ENCODE measurements at regions of chr11 and their contacts with region 1.

Region 1: DNA sequence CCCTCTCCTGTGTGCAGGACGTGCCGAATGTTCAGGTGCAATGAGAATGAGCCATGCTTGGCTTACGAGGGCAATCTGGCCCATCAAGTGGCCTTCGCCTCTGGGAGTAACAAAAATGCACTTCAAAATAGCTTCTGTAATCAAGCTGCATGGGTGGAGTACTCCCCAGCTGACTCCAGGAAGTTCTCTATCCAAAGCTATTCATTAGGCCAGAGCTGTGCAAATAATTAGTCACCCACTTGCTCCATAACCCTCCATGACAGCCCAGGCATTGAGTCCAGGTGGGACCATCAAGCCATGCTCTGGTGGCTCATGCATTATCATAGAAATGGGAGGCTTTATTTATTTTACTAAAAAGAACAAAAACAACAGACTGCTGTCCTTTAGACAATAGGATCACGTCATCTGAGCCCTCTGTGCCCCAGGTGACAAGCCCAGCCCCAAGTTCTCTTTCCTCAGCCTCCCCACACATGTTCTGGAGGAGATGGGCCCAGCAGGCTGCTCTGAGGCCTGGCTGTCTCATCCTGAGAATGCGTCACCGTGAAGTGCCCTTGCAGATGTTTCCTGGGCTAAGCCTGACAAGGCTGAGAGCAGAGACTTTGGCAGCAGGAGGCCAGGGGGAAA is 244.7 kb downstream of the ETS1 start:
- DNase-seq: peak; percentile 61 to 92 (median 66)
- H3K4me3 ChIP-seq: peak overlapping the region in 1 of 2 donors; percentile 25
- H3K4me3 Mint-ChIP-seq: peak overlapping the region in 7 of 8 donors; percentile 64 to 90 (median 83)
- H3K27ac ChIP-seq: peak overlapping the region; percentile 85
- H3K27ac Mint-ChIP-seq: peak overlapping the region; percentile 96 to 100 (median 99)
- H3K4me1 ChIP-seq: peaks cover 87% of the 10 kb centered on the region
- H3K4me1 Mint-ChIP-seq: peaks cover 70 to 99% (median 86%) of the 10 kb centered on the region in 4 donors
- H3K27me3 ChIP-seq: no peaks in the 10 kb centered on the region
- H3K27me3 Mint-ChIP-seq: no peaks in the 10 kb centered on the region

Region 2: GRCh38 chr11:128052912-128053641 is 289.5 kb before region 1 on chr11:
- CTCF ChIA-PET with region 1: no interaction called
- POLR2A ChIA-PET with region 1: no interaction called
- intact Hi-C with region 1: no loop called
- DNase-seq: peak in 4 of 5 donors; percentile 37 to 48 (median 46)
- H3K4me3 ChIP-seq: peak overlapping the region in 1 of 2 donors; percentile 44
- H3K4me3 Mint-ChIP-seq: peak overlapping the region; percentile 53 to 83 (median 78)
- H3K27ac ChIP-seq: peak overlapping the region; percentile 52
- H3K27ac Mint-ChIP-seq: peak overlapping the region; percentile 71 to 95 (median 85)
- H3K4me1 ChIP-seq: peaks cover 69% of the 10 kb centered on the region
- H3K4me1 Mint-ChIP-seq: peaks cover 49 to 78% (median 65%) of the 10 kb centered on the region in 4 donors
- H3K27me3 ChIP-seq: no peaks in the 10 kb centered on the region
- H3K27me3 Mint-ChIP-seq: no peaks in the 10 kb centered on the region

Region 3: DNA sequence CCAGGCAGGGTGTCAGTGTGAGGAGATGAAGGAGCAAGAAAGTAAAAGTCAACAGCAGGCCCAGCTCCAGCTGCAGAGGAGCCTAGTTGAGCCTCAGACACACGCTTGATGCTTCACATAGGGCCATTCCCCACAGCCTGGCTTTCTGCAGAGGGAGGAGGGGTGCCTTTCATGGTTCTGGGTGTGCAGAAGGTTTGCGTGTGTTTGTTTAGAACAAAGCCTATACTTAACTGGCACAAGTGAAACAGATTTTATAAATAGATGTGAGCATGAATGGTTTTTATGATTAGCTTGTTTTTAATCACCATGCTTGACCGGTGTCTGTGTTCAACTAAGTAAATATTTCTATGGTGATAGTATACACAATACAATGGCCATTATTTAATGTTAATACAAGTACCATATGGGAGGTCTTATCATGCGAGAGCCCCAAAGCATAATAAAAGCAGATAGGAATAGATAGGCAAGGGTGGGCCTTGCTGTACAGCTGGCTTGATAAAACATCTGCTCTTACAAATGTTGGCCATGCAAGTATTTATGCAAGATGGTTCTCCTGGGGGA is 45.5 kb before region 1 on chr11:
- CTCF ChIA-PET with region 1: interaction called, 13 read pairs
- POLR2A ChIA-PET with region 1: interaction called, 91 read pairs
- intact Hi-C with region 1: loop called (anchors 1 kb)
- DNase-seq: no peak
- H3K4me3 ChIP-seq: no peak overlapping the region
- H3K4me3 Mint-ChIP-seq: peak overlapping the region in 6 of 8 donors; percentile 43 to 93 (median 58)
- H3K27ac ChIP-seq: peak overlapping the region; percentile 1
- H3K27ac Mint-ChIP-seq: peak overlapping the region; percentile 82 to 100 (median 98)
- H3K4me1 ChIP-seq: peaks cover 100% of the 10 kb centered on the region
- H3K4me1 Mint-ChIP-seq: peaks cover 76 to 98% (median 86%) of the 10 kb centered on the region in 4 donors
- H3K27me3 ChIP-seq: no peaks in the 10 kb centered on the region
- H3K27me3 Mint-ChIP-seq: no peaks in the 10 kb centered on the region

Region 4: GRCh38 chr11:128354476-128354875 is 11.9 kb after region 1 on chr11:
- CTCF ChIA-PET with region 1: interaction called, 5 read pairs
- POLR2A ChIA-PET with region 1: interaction called, 21 read pairs
- intact Hi-C with region 1: no loop called
- DNase-seq: no peak
- H3K4me3 ChIP-seq: no peak overlapping the region
- H3K4me3 Mint-ChIP-seq: no peak overlapping the region
- H3K27ac ChIP-seq: no peak overlapping the region
- H3K27ac Mint-ChIP-seq: peak overlapping the region in 1 of 7 donors; percentile 4
- H3K4me1 ChIP-seq: peaks cover 17% of the 10 kb centered on the region
- H3K4me1 Mint-ChIP-seq: peaks cover 28 to 39% (median 36%) of the 10 kb centered on the region in 4 donors
- H3K27me3 ChIP-seq: no peaks in the 10 kb centered on the region
- H3K27me3 Mint-ChIP-seq: no peaks in the 10 kb centered on the region

Region 5: DNA sequence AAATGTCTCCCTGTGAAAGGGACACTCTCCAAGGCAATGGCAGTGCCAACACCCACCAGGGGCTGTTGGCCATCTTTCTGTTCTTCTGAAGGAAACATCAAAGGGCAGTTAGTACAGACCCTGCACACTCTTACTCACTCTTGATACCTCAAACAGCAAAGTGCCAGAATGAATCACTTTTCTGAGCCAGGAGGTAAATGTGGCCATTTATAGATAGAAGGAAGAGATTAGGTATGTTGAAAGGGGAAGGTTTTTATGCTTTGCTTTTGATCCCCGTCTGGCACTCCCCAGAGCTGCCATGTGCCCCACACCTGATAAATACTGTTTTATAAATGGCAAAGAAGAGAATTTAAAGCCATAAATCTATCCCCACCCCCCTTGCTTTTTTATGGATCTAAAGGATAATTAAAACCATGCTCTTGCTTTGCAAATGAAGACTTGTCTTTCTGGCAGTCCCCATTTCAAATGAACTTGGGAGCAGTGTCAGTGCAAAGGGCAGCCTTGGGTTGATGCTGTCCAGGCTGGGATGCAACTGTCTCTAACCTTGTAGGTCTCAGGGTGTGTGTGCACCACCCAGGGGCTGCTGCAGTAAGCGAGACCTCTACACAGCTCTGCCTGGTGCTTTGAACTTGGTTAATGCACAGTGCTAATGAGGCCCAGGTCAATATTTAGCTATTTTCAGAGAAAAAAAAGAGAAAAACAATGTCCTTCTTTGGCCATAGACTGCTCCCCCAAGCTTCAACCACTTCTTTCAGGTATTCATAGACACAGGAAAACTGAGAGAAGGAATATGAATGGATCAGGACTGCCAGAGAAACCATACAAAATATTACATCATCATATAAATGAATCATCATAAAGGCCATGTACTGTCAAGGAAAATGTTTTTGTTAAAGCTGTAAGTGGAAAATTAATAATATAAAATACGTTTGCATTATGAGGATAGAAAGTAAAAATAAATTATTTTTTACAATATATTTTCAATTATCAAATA is 37.3 kb after region 1 on chr11:
- CTCF ChIA-PET with region 1: interaction called, 3 read pairs
- POLR2A ChIA-PET with region 1: interaction called, 3 read pairs
- intact Hi-C with region 1: loop called (anchors 5 kb)
- DNase-seq: peak; percentile 34 to 70 (median 37)
- H3K4me3 ChIP-seq: no peak overlapping the region
- H3K4me3 Mint-ChIP-seq: peak overlapping the region in 5 of 8 donors; percentile 12 to 67 (median 42)
- H3K27ac ChIP-seq: no peak overlapping the region
- H3K27ac Mint-ChIP-seq: peak overlapping the region; percentile 65 to 90 (median 88)
- H3K4me1 ChIP-seq: peaks cover 32% of the 10 kb centered on the region
- H3K4me1 Mint-ChIP-seq: peaks cover 31 to 50% (median 35%) of the 10 kb centered on the region in 4 donors
- H3K27me3 ChIP-seq: no peaks in the 10 kb centered on the region
- H3K27me3 Mint-ChIP-seq: no peaks in the 10 kb centered on the region

Region 6: DNA sequence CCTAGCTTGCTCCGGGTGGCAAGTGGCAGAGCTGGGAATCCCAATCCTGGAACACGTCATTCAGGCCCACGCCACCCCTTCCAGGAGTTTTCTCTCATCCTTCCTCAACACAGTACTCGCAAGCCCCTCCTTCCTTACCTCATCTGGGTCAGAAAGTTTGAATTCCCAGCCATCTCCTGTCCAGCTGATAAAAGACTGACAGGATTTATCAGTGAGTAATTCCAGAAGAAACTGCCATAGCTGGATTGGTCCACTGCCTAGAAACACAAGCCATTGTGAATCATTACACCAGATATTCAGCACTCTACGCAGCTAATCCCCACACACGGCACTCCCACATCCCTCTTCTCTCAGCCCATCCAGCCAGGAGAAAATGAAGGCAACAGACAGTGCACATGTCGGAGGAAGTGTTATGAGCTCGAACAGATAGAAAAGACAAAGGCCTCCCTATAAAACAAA is 120.8 kb after region 1 on chr11:
- CTCF ChIA-PET with region 1: interaction called, 4 read pairs
- POLR2A ChIA-PET with region 1: interaction called, 13 read pairs
- intact Hi-C with region 1: no loop called
- DNase-seq: no peak
- H3K4me3 ChIP-seq: peak overlapping the region in 1 of 2 donors; percentile 3
- H3K4me3 Mint-ChIP-seq: peak overlapping the region; percentile 26 to 93 (median 78)
- H3K27ac ChIP-seq: peak overlapping the region; percentile 94
- H3K27ac Mint-ChIP-seq: peak overlapping the region; percentile 98 to 99 (median 99)
- H3K4me1 ChIP-seq: peaks cover 93% of the 10 kb centered on the region
- H3K4me1 Mint-ChIP-seq: peaks cover 76 to 95% (median 86%) of the 10 kb centered on the region in 4 donors
- H3K27me3 ChIP-seq: no peaks in the 10 kb centered on the region
- H3K27me3 Mint-ChIP-seq: no peaks in the 10 kb centered on the region

Region 7: GRCh38 chr11:128506999-128507611 is 164.5 kb after region 1 on chr11:
- CTCF ChIA-PET with region 1: interaction called, 3 read pairs
- POLR2A ChIA-PET with region 1: interaction called, 18 read pairs
- intact Hi-C with region 1: no loop called
- DNase-seq: peak in 1 of 5 donors; percentile 77
- H3K4me3 ChIP-seq: peak overlapping the region; percentile 37 to 39
- H3K4me3 Mint-ChIP-seq: peak overlapping the region; percentile 81 to 100 (median 94)
- H3K27ac ChIP-seq: peak overlapping the region; percentile 89
- H3K27ac Mint-ChIP-seq: peak overlapping the region; percentile 92 to 99 (median 98)
- H3K4me1 ChIP-seq: peaks cover 100% of the 10 kb centered on the region
- H3K4me1 Mint-ChIP-seq: peaks cover 80 to 100% (median 89%) of the 10 kb centered on the region in 4 donors
- H3K27me3 ChIP-seq: no peaks in the 10 kb centered on the region
- H3K27me3 Mint-ChIP-seq: no peaks in the 10 kb centered on the region

Region 8: GRCh38 chr11:128709402-128709801 is 366.8 kb after region 1 on chr11:
- CTCF ChIA-PET with region 1: no interaction called
- POLR2A ChIA-PET with region 1: no interaction called
- intact Hi-C with region 1: no loop called
- DNase-seq: no peak
- H3K4me3 ChIP-seq: no peak overlapping the region
- H3K4me3 Mint-ChIP-seq: peak overlapping the region in 4 of 8 donors; percentile 12 to 63 (median 40)
- H3K27ac ChIP-seq: no peak overlapping the region
- H3K27ac Mint-ChIP-seq: peak overlapping the region; percentile 14 to 97 (median 78)
- H3K4me1 ChIP-seq: peaks cover 100% of the 10 kb centered on the region
- H3K4me1 Mint-ChIP-seq: peaks cover 84 to 100% (median 95%) of the 10 kb centered on the region in 4 donors
- H3K27me3 ChIP-seq: no peaks in the 10 kb centered on the region
- H3K27me3 Mint-ChIP-seq: no peaks in the 10 kb centered on the region

Measured in CD4-positive, alpha-beta memory T cell (primary cell).